ENCODE measurements at regions of chr1 and their contacts with region 1.

Region 1: DNA sequence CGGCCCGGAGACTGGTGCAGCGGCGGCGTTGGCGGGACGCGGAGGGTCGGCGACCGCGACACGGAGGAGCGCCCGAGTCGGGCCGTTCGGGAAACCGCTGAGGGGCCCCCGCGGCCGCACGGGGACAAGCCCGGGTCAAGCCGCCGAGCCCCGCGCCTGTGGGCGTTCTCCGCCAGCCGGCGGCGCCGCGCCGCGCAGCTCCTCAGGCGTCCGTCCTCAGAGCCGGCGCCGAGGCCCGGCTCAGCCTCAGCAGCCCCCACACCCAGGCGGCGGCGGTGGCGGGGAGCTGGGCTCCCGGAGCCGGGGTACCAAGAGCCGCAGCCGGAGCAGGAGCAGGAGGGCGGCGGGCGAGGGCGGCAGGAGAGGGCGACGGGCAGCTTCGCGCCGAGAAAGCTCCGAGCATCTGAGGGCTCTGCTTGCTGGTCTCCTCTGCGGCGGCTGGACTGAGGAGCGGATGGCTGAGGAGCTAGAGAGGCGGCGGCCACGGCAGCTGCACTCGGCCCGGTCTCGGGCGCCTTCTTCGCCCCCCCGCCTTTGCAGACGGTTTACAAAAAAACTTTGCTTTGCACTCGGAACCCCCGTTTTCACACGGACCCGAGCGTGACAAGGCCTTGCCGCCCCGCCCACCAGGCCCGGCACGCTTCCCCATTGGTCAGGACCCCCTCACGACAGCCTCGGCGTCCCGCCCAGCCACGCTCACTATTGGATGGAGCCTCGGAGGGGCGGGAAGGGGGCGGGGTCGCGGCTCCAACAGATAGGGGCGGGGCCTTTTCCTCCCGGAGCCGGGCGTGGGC is at the start of gene SLC30A1:
- DNase-seq: peak; percentile 99 to 100 (median 99)
- H3K4me3 ChIP-seq: peak within 1 kb of the TSS; percentile 74 to 96 (median 96)
- H3K27ac ChIP-seq: peak within 1 kb of the TSS; percentile 89 to 95
- H3K4me1 ChIP-seq: peaks cover 3 to 10% (median 5%) of the 10 kb centered on the region in 3 donors
- H3K27me3 ChIP-seq: no peaks in the 10 kb centered on the region
- CTCF ChIP-seq: no peak
- total RNA-seq, gene SLC30A1: 37.7 TPM

Region 2: GRCh38 chr1:211654838-211655787 is 76.3 kb after region 1 on chr1:
- intact Hi-C with region 1: loop called (anchors 10 kb)
- DNase-seq: peak; percentile 90 to 94 (median 92)
- H3K4me3 ChIP-seq: peak overlapping the region in 1 of 3 donors; percentile 44
- H3K27ac ChIP-seq: no peak overlapping the region
- H3K4me1 ChIP-seq: peaks cover 0 to 6% (median 4%) of the 10 kb centered on the region in 3 donors
- H3K27me3 ChIP-seq: no peaks in the 10 kb centered on the region
- CTCF ChIP-seq: peak; percentile 94